ENCODE measurements at regions of chr7 and their contacts with region 1.

Region 1: DNA sequence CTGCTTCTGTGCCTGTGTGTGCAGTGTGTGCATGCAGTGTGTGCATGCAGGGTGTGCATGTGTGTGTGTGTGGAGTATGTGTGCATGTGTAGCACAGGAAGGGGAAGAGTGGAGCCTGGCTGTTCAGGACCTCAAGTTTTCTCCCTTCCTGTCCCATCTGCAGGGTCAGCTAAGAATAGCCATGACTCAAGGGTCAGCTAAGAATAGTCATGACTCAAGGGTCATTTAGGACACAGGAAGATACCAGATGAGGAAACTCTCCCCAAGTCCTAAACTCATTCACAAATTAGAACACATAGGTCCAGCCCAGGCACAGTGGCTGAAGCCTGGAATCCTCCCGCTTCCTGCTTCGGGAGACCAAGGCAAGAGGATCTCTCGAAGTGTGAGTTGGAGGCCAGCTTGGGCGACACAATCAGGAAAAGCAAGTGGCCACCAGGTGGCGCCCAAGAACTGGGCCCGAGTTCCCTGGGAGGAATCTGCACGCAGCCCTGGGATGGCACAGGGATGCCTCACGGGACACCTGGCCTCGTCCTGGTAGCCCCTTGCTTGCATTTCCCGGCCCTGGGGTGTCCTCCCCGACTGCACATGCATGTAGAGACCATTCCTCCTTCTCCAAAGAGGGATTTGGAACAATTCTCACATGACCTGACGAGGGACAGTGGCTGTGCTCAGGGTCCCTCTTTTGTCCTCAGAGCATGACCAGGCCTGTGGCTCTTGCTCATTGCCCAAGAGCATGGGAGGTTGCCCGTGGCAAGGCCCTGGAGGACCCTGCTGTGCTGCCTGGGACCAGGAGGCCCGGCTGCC is 21.4 kb upstream of the VOPP1 start:
- DNase-seq: peak; percentile 82
- H3K4me3 ChIP-seq: no peak overlapping the region
- H3K27ac ChIP-seq: no peak overlapping the region
- H3K4me1 ChIP-seq: peaks cover 0 to 6% (median 3%) of the 10 kb centered on the region in 4 donors
- H3K27me3 ChIP-seq: no peaks in the 10 kb centered on the region
- CTCF ChIP-seq: peak; percentile 65 to 84 (median 80)
- EP300 ChIP-seq: no peak
- POLR2A ChIP-seq: no peak

Region 2: DNA sequence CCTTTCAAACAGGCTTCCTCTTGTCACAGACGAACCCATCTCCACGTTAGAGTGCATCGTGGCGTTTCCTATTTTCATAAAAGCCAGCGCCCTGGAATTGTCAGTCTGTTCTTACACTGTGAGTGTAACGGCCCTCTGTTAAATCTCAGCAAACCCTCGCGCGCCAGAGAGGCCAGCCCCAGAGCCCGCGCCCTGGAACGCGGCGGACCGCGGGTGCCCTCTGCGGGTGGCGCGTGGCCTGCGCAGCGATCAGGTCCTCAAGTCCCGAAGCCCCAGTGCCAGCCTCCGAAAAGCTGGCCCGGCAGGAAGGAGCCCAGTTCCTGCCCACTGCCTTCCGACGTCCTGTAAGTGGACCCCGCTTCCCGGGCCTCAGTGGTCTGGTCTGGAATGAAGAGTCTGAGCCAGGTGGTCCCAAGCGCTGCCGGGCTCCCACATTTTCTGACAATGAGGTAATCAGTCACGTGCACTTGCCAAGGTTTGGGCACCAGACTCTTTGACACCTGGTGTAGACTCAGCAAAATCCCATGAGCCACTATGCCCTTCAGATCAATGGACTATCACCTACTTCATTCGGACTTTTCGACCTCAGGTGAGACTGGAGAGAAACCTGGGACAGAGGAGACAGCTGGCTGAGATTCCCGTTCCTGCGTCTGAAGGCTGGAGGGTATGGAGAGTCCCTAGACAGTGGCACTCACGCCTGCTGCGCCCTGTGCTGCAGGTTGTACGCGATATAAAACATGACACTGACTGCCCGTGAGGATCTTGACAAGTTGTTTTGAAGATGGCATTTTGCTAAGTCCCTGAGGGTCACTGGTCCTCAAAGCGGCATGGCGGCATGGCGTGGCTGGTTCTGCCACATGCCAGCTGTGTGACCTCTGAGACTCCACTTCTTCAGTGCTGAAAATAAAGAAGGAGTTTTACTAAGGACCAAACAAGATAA is 338.0 kb before region 1 on chr7:
- in situ Hi-C with region 1: loop called in 1 of 4 experiments (anchors 25 kb)
- intact Hi-C with region 1: no loop called
- DNase-seq: peak; percentile 87
- H3K4me3 ChIP-seq: peak overlapping the region; percentile 37 to 66 (median 54)
- H3K27ac ChIP-seq: peak overlapping the region; percentile 33 to 64 (median 40)
- H3K4me1 ChIP-seq: peaks cover 7 to 16% (median 15%) of the 10 kb centered on the region in 4 donors
- H3K27me3 ChIP-seq: peaks cover 35% of the 10 kb centered on the region
- CTCF ChIP-seq: peak; percentile 86 to 88 (median 87)
- EP300 ChIP-seq: no peak
- POLR2A ChIP-seq: no peak

Region 3: GRCh38 chr7:55280031-55280454 is 313.7 kb before region 1 on chr7:
- in situ Hi-C with region 1: loop called in 1 of 4 experiments (anchors 25 kb)
- intact Hi-C with region 1: no loop called
- DNase-seq: peak; percentile 65
- H3K4me3 ChIP-seq: no peak overlapping the region
- H3K27ac ChIP-seq: no peak overlapping the region
- H3K4me1 ChIP-seq: no peaks in the 10 kb centered on the region
- H3K27me3 ChIP-seq: no peaks in the 10 kb centered on the region
- CTCF ChIP-seq: peak; percentile 63 to 67 (median 65)
- EP300 ChIP-seq: no peak
- POLR2A ChIP-seq: no peak

Region 4: GRCh38 chr7:55432939-55433784 is 160.6 kb before region 1 on chr7:
- in situ Hi-C with region 1: loop called in 1 of 4 experiments (anchors 10 kb)
- intact Hi-C with region 1: no loop called
- DNase-seq: no peak
- H3K4me3 ChIP-seq: no peak overlapping the region
- H3K27ac ChIP-seq: peak overlapping the region; percentile 61 to 77 (median 68)
- H3K4me1 ChIP-seq: peaks cover 0 to 32% (median 17%) of the 10 kb centered on the region in 4 donors
- H3K27me3 ChIP-seq: no peaks in the 10 kb centered on the region
- CTCF ChIP-seq: peak; percentile 31 to 56 (median 49)
- EP300 ChIP-seq: no peak
- POLR2A ChIP-seq: no peak

Region 5: GRCh38 chr7:55469271-55469681 is 124.4 kb before region 1 on chr7:
- in situ Hi-C with region 1: loop called in 1 of 4 experiments (anchors 25 kb)
- intact Hi-C with region 1: no loop called
- DNase-seq: peak; percentile 32
- H3K4me3 ChIP-seq: no peak overlapping the region
- H3K27ac ChIP-seq: peak overlapping the region in 1 of 4 donors; percentile 14
- H3K4me1 ChIP-seq: no peaks in the 10 kb centered on the region
- H3K27me3 ChIP-seq: no peaks in the 10 kb centered on the region
- CTCF ChIP-seq: no peak
- EP300 ChIP-seq: no peak
- POLR2A ChIP-seq: no peak

Measured in transverse colon (tissue), 4 donors.